Spleen (tissue), 13 donors: ENCODE measurements at regions of chr6 and their contacts with region 1.

Region 1: GRCh38 chr6:35342258-35343091 is at the start of gene PPARD:
- DNase-seq: peak; percentile 100
- H3K4me3 ChIP-seq: peak within 1 kb of the TSS; percentile 56 to 87 (median 80)
- H3K27ac ChIP-seq: peak within 1 kb of the TSS; percentile 53 to 95 (median 92)
- H3K4me1 ChIP-seq: peaks cover 17 to 55% (median 49%) of the 10 kb centered on the region in 6 donors
- H3K27me3 ChIP-seq: no peaks in the 10 kb centered on the region
- CTCF ChIP-seq: peak; percentile 98 to 100 (median 99)
- POLR2A ChIP-seq: peak in 1 of 3 donors; percentile 38
- total RNA-seq, gene PPARD: 24.5 to 37.4 (median 34.9) TPM

Region 2: DNA sequence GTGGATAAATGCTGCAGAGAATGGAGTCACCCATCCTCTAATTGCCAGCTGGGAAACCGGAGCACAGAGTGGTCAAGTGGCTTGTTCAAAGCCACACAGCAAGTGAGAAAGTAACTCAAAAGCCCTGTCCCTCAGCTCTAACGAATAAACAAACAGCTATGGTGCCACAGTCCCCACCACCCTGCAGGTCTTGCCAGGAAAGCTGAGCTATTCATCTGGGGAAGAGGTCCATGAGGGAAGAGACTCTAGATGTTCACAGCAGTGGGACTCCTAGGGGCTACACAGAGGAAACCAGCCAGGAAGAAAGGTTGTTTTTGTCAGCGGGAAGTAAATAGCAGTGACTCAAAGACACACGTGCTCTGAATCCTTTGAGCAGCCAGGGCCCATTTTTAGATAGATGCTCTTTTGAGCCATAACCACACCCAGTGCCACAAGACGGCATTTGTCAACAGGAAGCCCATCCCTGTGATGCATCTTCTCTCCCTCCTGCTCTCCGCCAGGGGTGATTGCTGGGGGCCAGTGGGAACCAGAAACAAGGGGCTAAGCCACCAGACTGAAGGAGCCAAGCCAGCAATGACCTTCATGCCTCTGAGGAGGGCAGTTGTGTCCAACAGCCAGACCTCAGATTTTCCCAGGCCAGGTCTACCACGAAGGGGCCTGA is 168.9 kb before region 1 on chr6:
- intact Hi-C with region 1: no loop called
- DNase-seq: no peak
- H3K4me3 ChIP-seq: no peak overlapping the region
- H3K27ac ChIP-seq: no peak overlapping the region
- H3K4me1 ChIP-seq: no peaks in the 10 kb centered on the region
- H3K27me3 ChIP-seq: peaks cover 0 to 8% (median 0%) of the 10 kb centered on the region in 7 donors
- CTCF ChIP-seq: no peak
- POLR2A ChIP-seq: no peak

Region 3: GRCh38 chr6:35452186-35453090 is 110.0 kb after region 1 on chr6 and contains the start of gene FANCE:
- intact Hi-C with region 1: loop called (anchors 5 kb)
- DNase-seq: peak; percentile 99
- H3K4me3 ChIP-seq: peak within 1 kb of the TSS; percentile 66 to 96 (median 82)
- H3K27ac ChIP-seq: peak within 1 kb of the TSS in 7 of 8 donors; percentile 59 to 88 (median 79)
- H3K4me1 ChIP-seq: peaks cover 22 to 51% (median 31%) of the 10 kb centered on the region in 6 donors
- H3K27me3 ChIP-seq: no peaks in the 10 kb centered on the region
- CTCF ChIP-seq: peak in 3 of 11 experiments; percentile 23 to 49 (median 37)
- POLR2A ChIP-seq: no peak
- total RNA-seq, gene FANCE: 3.2 to 5.8 (median 4.3) TPM

Region 4: DNA sequence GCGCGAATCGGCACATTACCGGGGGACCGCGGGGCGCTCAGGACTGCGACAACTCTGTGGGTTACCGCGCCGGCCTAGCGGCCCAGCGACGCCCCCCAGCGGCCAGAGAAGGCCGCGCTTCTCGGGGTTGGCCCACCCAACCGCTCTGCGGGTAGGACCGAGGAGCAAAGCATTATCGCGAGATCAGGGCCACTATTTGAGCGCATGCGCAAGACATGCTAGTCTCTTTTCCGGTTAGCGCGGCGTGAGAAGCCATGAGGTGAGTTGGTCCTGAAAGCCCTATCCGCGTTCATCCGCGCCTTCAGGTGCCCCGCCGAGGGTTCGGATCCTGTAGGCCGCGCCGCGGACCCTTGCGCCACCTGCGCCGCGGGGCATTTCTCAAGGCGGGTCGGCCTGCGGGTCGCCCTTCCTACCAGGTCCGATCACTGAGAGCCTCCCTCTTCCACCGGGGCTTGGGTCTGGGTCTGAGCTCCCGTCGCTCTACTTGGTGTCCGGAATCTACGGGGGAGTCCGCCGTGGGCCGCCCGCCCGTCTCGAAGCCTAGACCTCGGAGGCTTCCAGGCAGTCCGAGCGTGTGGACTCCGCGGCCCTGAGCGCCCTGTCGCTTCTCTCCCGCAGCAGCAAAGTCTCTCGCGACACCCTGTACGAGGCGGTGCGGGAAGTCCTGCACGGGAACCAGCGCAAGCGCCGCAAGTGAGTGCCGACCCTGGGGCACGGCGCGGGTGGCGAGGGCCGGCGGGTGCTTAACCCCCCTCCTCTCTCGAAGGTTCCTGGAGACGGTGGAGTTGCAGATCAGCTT is 125.9 kb after region 1 on chr6 and contains the start of gene RPL10A:
- intact Hi-C with region 1: loop called (anchors 5 kb)
- DNase-seq: peak; percentile 98
- H3K4me3 ChIP-seq: peak within 1 kb of the TSS; percentile 62 to 93 (median 78)
- H3K27ac ChIP-seq: peak within 1 kb of the TSS; percentile 87 to 92 (median 92)
- H3K4me1 ChIP-seq: peaks cover 22 to 57% (median 43%) of the 10 kb centered on the region in 6 donors
- H3K27me3 ChIP-seq: no peaks in the 10 kb centered on the region
- CTCF ChIP-seq: peak; percentile 96 to 100 (median 99)
- POLR2A ChIP-seq: peak in 2 of 3 donors; percentile 47 to 80
- total RNA-seq, gene RPL10A: 962 to 1,187 (median 1,013) TPM

Region 5: DNA sequence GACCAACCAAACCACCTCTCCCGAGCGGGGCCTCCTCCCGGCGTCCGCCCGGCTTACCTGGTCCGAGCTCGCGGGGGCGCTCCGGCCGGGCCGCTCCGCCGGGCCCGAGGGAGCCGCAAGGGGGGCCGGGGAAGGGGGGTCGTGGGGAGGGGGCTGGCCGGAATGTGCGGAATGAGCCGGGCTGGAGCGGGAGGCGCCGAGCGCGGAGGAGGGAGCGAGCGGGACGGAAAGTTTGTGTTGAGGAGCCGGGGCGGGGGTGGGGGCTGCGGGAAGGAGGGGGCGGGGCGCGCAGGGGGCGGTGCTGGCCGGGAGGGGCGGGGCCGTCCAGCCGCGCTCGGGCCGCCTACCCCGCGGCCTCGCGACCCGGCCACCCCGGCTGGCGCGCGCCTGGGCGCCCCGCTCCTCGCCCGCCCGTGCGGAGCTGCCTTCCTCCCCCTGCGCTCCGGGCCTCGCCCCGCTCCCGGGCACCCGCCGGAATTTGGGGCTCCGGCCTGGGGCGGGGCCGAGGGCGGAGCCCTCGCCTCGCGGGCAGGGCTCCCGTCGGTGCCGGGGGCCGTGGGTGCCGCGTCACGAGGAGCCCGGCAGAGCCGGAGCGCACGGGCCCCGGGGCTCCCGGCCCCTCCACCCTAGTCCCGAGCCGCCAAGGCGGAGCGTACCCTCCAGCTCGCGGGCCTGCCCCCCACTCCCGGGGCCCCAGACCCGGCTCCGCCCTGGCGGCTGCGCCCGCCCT is 154.5 kb after region 1 on chr6 and contains the start of gene TEAD3:
- intact Hi-C with region 1: no loop called
- DNase-seq: peak; percentile 84
- H3K4me3 ChIP-seq: peak within 1 kb of the TSS; percentile 48 to 86 (median 68)
- H3K27ac ChIP-seq: peak within 1 kb of the TSS; percentile 55 to 86 (median 84)
- H3K4me1 ChIP-seq: peaks cover 5 to 65% (median 39%) of the 10 kb centered on the region in 6 donors
- H3K27me3 ChIP-seq: peaks cover 0 to 88% (median 25%) of the 10 kb centered on the region in 7 donors
- CTCF ChIP-seq: no peak
- POLR2A ChIP-seq: no peak
- total RNA-seq, gene TEAD3: 2.8 to 15.2 (median 9.3) TPM